Calu3 (cell line): ENCODE measurements at regions of chr3 and their contacts with region 1.

Region 1: DNA sequence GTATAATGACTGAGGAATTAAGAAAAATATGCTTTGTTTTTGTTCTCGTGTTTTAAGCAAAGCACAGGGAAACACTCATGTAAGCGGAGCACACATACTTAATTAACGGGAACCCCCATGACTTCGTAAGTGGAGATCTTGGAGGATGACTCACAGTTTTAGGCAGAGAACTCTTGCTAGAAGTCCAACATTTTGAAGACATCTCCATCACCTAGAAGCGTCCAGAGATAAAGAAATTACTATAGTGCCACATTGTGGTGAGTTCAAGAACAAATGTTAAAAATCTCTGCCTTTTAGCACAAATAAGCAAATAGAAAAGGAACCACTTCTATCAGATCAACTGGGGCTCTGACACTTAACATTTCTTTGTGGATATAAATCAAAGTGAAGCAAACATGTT is 194.1 kb upstream of the ARHGEF26 start:
- DNase-seq: no peak
- H3K4me3 Mint-ChIP-seq: no peak overlapping the region
- H3K27ac Mint-ChIP-seq: no peak overlapping the region
- H3K4me1 Mint-ChIP-seq: no peaks in the 10 kb centered on the region
- H3K27me3 Mint-ChIP-seq: no peaks in the 10 kb centered on the region
- CTCF ChIP-seq: peak; percentile 38

Region 2: DNA sequence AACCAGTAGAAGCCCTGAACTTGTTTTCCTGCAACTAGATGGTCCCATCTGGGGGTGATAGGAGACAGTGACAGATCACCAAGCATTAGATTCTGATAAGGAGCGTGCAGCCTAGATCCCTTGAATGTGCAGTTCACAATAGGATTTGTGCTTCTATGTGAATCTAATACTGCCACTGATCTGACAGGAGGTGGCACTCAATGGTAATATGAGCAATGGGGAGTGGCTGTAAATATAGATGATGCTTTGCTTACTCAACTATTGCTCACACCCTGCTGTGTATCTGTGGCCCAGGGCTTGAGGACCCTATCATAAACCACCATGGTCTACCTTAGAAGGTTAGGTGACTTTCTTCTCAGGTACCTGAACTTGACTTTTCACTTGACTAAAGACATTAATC is 223.0 kb before region 1 on chr3:
- CTCF ChIA-PET with region 1: no interaction called
- intact Hi-C with region 1: loop called (anchors 1 kb)
- DNase-seq: peak; percentile 7
- H3K4me3 Mint-ChIP-seq: no peak overlapping the region
- H3K27ac Mint-ChIP-seq: no peak overlapping the region
- H3K4me1 Mint-ChIP-seq: no peaks in the 10 kb centered on the region
- H3K27me3 Mint-ChIP-seq: no peaks in the 10 kb centered on the region
- CTCF ChIP-seq: no peak

Region 3: DNA sequence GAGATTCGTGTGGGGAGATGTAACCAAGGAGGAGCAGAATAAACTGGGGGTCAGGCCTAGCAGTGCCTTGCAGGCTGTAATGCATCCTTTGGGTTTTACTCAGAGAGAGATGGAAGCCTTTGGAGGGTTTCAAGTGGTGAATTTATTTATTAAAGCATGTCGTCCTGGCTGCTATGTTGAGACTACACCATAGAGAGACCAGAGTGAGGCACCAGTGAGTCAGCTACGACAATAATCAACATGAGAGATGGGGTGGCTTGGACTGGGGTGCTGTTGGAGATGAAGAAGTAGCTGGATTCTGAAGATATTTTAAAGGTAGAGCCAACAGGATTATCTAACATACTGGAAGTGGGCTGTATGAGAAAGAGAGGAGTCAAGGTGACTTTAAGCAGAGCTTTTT is 141.2 kb before region 1 on chr3:
- CTCF ChIA-PET with region 1: no interaction called
- intact Hi-C with region 1: loop called (anchors 5 kb)
- DNase-seq: no peak
- H3K4me3 Mint-ChIP-seq: no peak overlapping the region
- H3K27ac Mint-ChIP-seq: no peak overlapping the region
- H3K4me1 Mint-ChIP-seq: no peaks in the 10 kb centered on the region
- H3K27me3 Mint-ChIP-seq: no peaks in the 10 kb centered on the region
- CTCF ChIP-seq: no peak

Region 4: DNA sequence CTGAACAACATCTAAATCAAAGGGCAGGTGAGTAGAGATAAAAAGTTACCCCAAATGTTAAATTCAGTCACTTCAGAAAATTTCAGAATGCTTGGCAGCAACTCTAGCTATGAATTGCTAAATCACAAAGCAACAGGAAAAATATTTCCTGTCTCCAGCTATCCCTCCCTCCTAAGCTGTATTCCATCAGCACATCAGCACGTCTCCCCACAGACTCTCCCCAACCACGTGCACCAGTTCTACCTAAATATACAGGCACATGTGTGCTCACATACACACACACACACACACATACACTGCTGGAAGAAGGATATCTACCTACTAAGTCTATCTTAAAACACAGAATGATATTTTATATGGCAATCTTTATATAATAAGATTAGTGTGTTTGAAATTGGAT is 17.0 kb after region 1 on chr3:
- CTCF ChIA-PET with region 1: no interaction called
- intact Hi-C with region 1: no loop called
- DNase-seq: no peak
- H3K4me3 Mint-ChIP-seq: no peak overlapping the region
- H3K27ac Mint-ChIP-seq: no peak overlapping the region
- H3K4me1 Mint-ChIP-seq: no peaks in the 10 kb centered on the region
- H3K27me3 Mint-ChIP-seq: no peaks in the 10 kb centered on the region
- CTCF ChIP-seq: no peak